PC-3 (cell line): ENCODE measurements at regions of chr1 and their contacts with region 1.

Region 1: GRCh38 chr1:182376936-182377574 is 14.5 kb downstream of the GLUL start:
- DNase-seq: peak; percentile 62
- ATAC-seq: peak; percentile 84
- H3K4me3 ChIP-seq: no peak overlapping the region
- H3K27ac ChIP-seq: peak overlapping the region; percentile 74
- H3K4me1 ChIP-seq: peaks cover 17% of the 10 kb centered on the region
- H3K27me3 ChIP-seq: no peaks in the 10 kb centered on the region
- CTCF ChIP-seq: no peak

Region 2: DNA sequence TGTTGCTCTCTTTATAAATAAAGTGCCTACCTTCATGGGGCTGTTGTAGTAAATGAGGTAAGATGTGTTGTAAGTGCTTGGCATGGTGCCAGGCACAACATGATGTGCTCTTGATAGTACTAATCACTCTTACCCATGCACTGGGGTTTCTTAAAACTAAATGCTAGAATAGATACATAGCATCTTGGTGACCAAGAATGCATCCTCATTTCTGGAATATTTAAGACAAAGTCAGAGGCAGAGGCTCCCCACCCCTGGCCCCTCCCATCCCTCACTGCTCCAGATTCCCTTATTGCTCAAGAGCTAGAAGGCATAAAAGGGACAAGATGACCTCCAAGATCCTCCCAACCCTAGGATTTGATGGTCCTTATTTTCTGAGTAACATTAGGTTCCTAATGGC is 46.8 kb before region 1 on chr1:
- CTCF ChIA-PET with region 1: no interaction called
- POLR2A ChIA-PET with region 1: no interaction called
- intact Hi-C with region 1: loop called (anchors 5 kb)
- DNase-seq: no peak
- ATAC-seq: no peak
- H3K4me3 ChIP-seq: no peak overlapping the region
- H3K27ac ChIP-seq: no peak overlapping the region
- H3K4me1 ChIP-seq: no peaks in the 10 kb centered on the region
- H3K27me3 ChIP-seq: no peaks in the 10 kb centered on the region
- CTCF ChIP-seq: no peak

Region 3: DNA sequence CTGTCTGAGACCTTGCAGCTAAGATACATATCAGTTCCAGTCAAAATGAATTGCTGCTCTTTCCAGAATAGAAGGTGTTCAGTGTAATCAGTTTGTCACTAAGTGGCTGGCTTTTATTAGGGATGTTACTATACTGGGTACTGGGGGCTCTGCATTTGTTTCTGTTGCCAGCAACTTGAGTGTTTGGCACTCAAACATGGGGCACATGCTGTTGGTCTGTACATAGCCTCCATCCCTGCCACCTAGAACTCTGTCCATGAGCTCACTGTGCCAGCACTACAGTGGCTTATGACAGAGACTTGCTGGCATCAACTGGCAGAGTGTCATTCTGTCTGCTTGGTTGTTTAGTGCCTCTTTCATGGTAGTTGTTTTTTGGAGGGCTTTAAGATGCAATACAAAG is 117.9 kb after region 1 on chr1:
- CTCF ChIA-PET with region 1: no interaction called
- POLR2A ChIA-PET with region 1: no interaction called
- intact Hi-C with region 1: no loop called
- DNase-seq: no peak
- ATAC-seq: no peak
- H3K4me3 ChIP-seq: no peak overlapping the region
- H3K27ac ChIP-seq: no peak overlapping the region
- H3K4me1 ChIP-seq: no peaks in the 10 kb centered on the region
- H3K27me3 ChIP-seq: no peaks in the 10 kb centered on the region
- CTCF ChIP-seq: no peak

Region 4: GRCh38 chr1:182507665-182508064 is 130.6 kb after region 1 on chr1:
- CTCF ChIA-PET with region 1: no interaction called
- POLR2A ChIA-PET with region 1: no interaction called
- intact Hi-C with region 1: no loop called
- DNase-seq: no peak
- ATAC-seq: no peak
- H3K4me3 ChIP-seq: no peak overlapping the region
- H3K27ac ChIP-seq: no peak overlapping the region
- H3K4me1 ChIP-seq: no peaks in the 10 kb centered on the region
- H3K27me3 ChIP-seq: no peaks in the 10 kb centered on the region
- CTCF ChIP-seq: no peak